ENCODE measurements at regions of chr10 and their contacts with region 1.

Region 1: GRCh38 chr10:132637477-132638129 is 100.0 kb downstream of the INPP5A start:
- DNase-seq: no peak
- H3K4me3 ChIP-seq: peak overlapping the region; percentile 4 to 23 (median 15)
- H3K27ac ChIP-seq: peak overlapping the region; percentile 92 to 98 (median 96)
- H3K4me1 ChIP-seq: peaks cover 36 to 99% (median 95%) of the 10 kb centered on the region in 4 donors
- H3K27me3 ChIP-seq: no peaks in the 10 kb centered on the region
- CTCF ChIP-seq: peak; percentile 74 to 82 (median 77)
- EP300 ChIP-seq: no peak
- POLR2A ChIP-seq: no peak

Region 2: GRCh38 chr10:132458593-132459300 is 178.9 kb before region 1 on chr10:
- intact Hi-C with region 1: loop called (anchors 1 kb)
- DNase-seq: no peak
- H3K4me3 ChIP-seq: no peak overlapping the region
- H3K27ac ChIP-seq: peak overlapping the region in 1 of 4 donors; percentile 16
- H3K4me1 ChIP-seq: peaks cover 28 to 55% (median 50%) of the 10 kb centered on the region in 4 donors
- H3K27me3 ChIP-seq: peaks cover 0 to 19% (median 0%) of the 10 kb centered on the region in 4 donors
- CTCF ChIP-seq: peak in 2 of 3 experiments; percentile 97
- EP300 ChIP-seq: no peak
- POLR2A ChIP-seq: no peak

Region 3: DNA sequence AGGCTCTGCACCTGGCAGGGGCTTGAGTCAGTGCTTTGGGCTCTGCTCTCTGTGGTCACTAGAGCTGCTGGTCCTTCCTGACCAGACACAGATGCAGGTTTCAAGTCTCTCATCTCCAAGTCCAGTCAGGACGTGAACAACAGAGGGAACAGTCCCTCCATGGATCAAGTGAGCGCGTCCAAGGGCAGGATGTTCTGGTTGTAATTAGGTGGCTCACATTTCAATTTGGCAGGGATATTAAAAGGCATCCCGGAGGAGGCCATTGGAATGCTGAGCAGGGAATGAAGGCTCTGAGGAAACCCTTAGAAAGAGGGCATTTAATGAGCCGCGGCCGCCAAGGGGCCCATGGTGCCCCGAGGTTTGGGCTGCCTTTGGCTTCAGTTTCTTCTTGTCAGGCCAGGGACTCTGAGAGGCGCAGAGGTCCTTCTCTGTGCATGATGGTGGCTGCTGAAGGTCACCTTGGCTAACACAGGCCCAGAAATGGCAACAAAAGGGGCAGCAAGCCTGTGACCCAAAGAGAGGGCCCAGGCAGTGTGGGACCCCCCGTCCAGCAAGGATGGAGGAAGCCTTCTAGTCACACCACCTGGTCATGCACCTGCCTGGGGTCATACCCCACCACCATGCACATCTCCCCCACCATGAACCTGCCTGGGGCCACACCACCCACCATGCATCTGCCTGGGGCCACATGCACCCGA is 130.7 kb before region 1 on chr10:
- intact Hi-C with region 1: loop called (anchors 5 kb)
- DNase-seq: no peak
- H3K4me3 ChIP-seq: no peak overlapping the region
- H3K27ac ChIP-seq: peak overlapping the region; percentile 69 to 80 (median 74)
- H3K4me1 ChIP-seq: peaks cover 32 to 44% (median 38%) of the 10 kb centered on the region in 4 donors
- H3K27me3 ChIP-seq: no peaks in the 10 kb centered on the region
- CTCF ChIP-seq: no peak
- EP300 ChIP-seq: no peak
- POLR2A ChIP-seq: no peak

Region 4: GRCh38 chr10:132516771-132517725 is 120.6 kb before region 1 on chr10:
- intact Hi-C with region 1: loop called (anchors 5 kb)
- DNase-seq: peak; percentile 97
- H3K4me3 ChIP-seq: peak overlapping the region; percentile 21 to 43 (median 28)
- H3K27ac ChIP-seq: peak overlapping the region; percentile 89 to 97 (median 96)
- H3K4me1 ChIP-seq: peaks cover 69 to 73% (median 72%) of the 10 kb centered on the region in 4 donors
- H3K27me3 ChIP-seq: no peaks in the 10 kb centered on the region
- CTCF ChIP-seq: no peak
- EP300 ChIP-seq: no peak
- POLR2A ChIP-seq: no peak

Region 5: GRCh38 chr10:132536971-132537712 is 100.5 kb before region 1 on chr10:
- intact Hi-C with region 1: loop called (anchors 5 kb)
- DNase-seq: peak; percentile 100
- H3K4me3 ChIP-seq: peak overlapping the region; percentile 73 to 93 (median 83)
- H3K27ac ChIP-seq: peak overlapping the region; percentile 93 to 98 (median 96)
- H3K4me1 ChIP-seq: peaks cover 53 to 67% (median 63%) of the 10 kb centered on the region in 4 donors
- H3K27me3 ChIP-seq: no peaks in the 10 kb centered on the region
- CTCF ChIP-seq: peak; percentile 31 to 64 (median 44)
- EP300 ChIP-seq: no peak
- POLR2A ChIP-seq: no peak

Region 6: GRCh38 chr10:132571650-132572535 is 65.7 kb before region 1 on chr10:
- intact Hi-C with region 1: no loop called
- DNase-seq: no peak
- H3K4me3 ChIP-seq: peak overlapping the region in 3 of 4 donors; percentile 7 to 20 (median 18)
- H3K27ac ChIP-seq: peak overlapping the region; percentile 72 to 79 (median 74)
- H3K4me1 ChIP-seq: peaks cover 54 to 71% (median 59%) of the 10 kb centered on the region in 4 donors
- H3K27me3 ChIP-seq: no peaks in the 10 kb centered on the region
- CTCF ChIP-seq: no peak
- EP300 ChIP-seq: no peak
- POLR2A ChIP-seq: no peak

Region 7: GRCh38 chr10:132593389-132593788 is 44.2 kb before region 1 on chr10:
- intact Hi-C with region 1: loop called (anchors 5 kb)
- DNase-seq: no peak
- H3K4me3 ChIP-seq: no peak overlapping the region
- H3K27ac ChIP-seq: peak overlapping the region; percentile 73 to 89 (median 86)
- H3K4me1 ChIP-seq: peaks cover 83 to 100% (median 99%) of the 10 kb centered on the region in 4 donors
- H3K27me3 ChIP-seq: no peaks in the 10 kb centered on the region
- CTCF ChIP-seq: no peak
- EP300 ChIP-seq: no peak
- POLR2A ChIP-seq: no peak

Region 8: GRCh38 chr10:132705173-132705572 is 67.6 kb after region 1 on chr10:
- intact Hi-C with region 1: no loop called
- DNase-seq: no peak
- H3K4me3 ChIP-seq: no peak overlapping the region
- H3K27ac ChIP-seq: no peak overlapping the region
- H3K4me1 ChIP-seq: peaks cover 4 to 22% (median 13%) of the 10 kb centered on the region in 4 donors
- H3K27me3 ChIP-seq: no peaks in the 10 kb centered on the region
- CTCF ChIP-seq: no peak
- EP300 ChIP-seq: no peak
- POLR2A ChIP-seq: no peak

Region 9: GRCh38 chr10:133309111-133309719 is 671.6 kb after region 1 on chr10:
- intact Hi-C with region 1: no loop called
- DNase-seq: peak; percentile 98
- H3K4me3 ChIP-seq: peak overlapping the region; percentile 90 to 100 (median 96)
- H3K27ac ChIP-seq: peak overlapping the region; percentile 94 to 98 (median 96)
- H3K4me1 ChIP-seq: peaks cover 15 to 54% (median 49%) of the 10 kb centered on the region in 4 donors
- H3K27me3 ChIP-seq: no peaks in the 10 kb centered on the region
- CTCF ChIP-seq: no peak
- EP300 ChIP-seq: no peak
- POLR2A ChIP-seq: no peak

Measured in esophagus muscularis mucosa (tissue), 4 donors.